ENCODE measurements at regions of chr5 and their contacts with region 1.

Region 1: GRCh38 chr5:164383662-164384061 is 878.2 kb downstream of the MAT2B start:
- DNase-seq: no peak
- ATAC-seq: no peak
- H3K4me3 ChIP-seq: no peak overlapping the region
- H3K27ac ChIP-seq: no peak overlapping the region
- H3K4me1 ChIP-seq: no peaks in the 10 kb centered on the region
- H3K27me3 ChIP-seq: no peaks in the 10 kb centered on the region
- CTCF ChIP-seq: no peak
- EP300 ChIP-seq: no peak
- POLR2A ChIP-seq: no peak
- RAD21 ChIP-seq: no peak

Region 2: DNA sequence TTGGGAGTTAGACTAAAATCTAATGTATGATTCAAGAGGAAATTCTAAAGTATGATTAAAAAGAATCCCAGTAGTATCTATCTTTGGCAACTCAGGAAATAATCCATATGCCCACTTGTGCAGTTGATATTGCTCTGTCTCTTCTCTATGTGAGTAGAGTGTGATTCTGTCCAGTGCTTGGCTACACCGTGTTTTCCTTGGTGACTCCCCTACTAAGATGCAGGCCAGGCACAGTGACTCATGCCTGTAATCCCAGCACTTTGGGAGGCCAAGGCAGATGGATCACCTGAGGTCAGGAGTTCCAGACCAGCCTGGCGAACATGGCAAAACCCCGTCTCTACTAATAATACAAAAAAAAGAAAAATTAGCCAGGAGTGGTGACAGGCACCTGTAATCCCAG is 382.8 kb before region 1 on chr5:
- CTCF ChIA-PET with region 1: no interaction called
- POLR2A ChIA-PET with region 1: no interaction called
- RAD21 ChIA-PET with region 1: no interaction called
- SMC1A ChIA-PET with region 1: no interaction called
- in situ Hi-C with region 1: no loop called
- intact Hi-C with region 1: no loop called
- DNase-seq: no peak
- ATAC-seq: no peak
- H3K4me3 ChIP-seq: no peak overlapping the region
- H3K27ac ChIP-seq: no peak overlapping the region
- H3K4me1 ChIP-seq: no peaks in the 10 kb centered on the region
- H3K27me3 ChIP-seq: no peaks in the 10 kb centered on the region
- CTCF ChIP-seq: no peak
- EP300 ChIP-seq: no peak
- POLR2A ChIP-seq: no peak
- RAD21 ChIP-seq: no peak

Region 3: GRCh38 chr5:164370841-164371240 is 12.8 kb before region 1 on chr5:
- CTCF ChIA-PET with region 1: no interaction called
- POLR2A ChIA-PET with region 1: no interaction called
- RAD21 ChIA-PET with region 1: interaction called, 6 read pairs
- SMC1A ChIA-PET with region 1: interaction called, 12 read pairs
- in situ Hi-C with region 1: no loop called
- intact Hi-C with region 1: no loop called
- DNase-seq: no peak
- ATAC-seq: no peak
- H3K4me3 ChIP-seq: no peak overlapping the region
- H3K27ac ChIP-seq: no peak overlapping the region
- H3K4me1 ChIP-seq: no peaks in the 10 kb centered on the region
- H3K27me3 ChIP-seq: no peaks in the 10 kb centered on the region
- CTCF ChIP-seq: no peak
- EP300 ChIP-seq: no peak
- POLR2A ChIP-seq: no peak
- RAD21 ChIP-seq: no peak

Measured in GM12878 (cell line).